Activated CD4-positive, alpha-beta T cell treated with anti-CD3 and anti-CD28 coated beads, Interleukin-2, amount 10 ng/mL, durations not matched to agents 7 days and 5 days (primary cell): ENCODE measurements at regions of chr6 and their contacts with region 1.

Region 1: GRCh38 chr6:20334334-20334733 is 67.3 kb upstream of the E2F3 start:
- DNase-seq: no peak
- H3K4me3 Mint-ChIP-seq: no peak overlapping the region
- H3K27ac Mint-ChIP-seq: no peak overlapping the region
- H3K4me1 Mint-ChIP-seq: peaks cover 39% of the 10 kb centered on the region
- H3K27me3 Mint-ChIP-seq: no peaks in the 10 kb centered on the region

Region 2: DNA sequence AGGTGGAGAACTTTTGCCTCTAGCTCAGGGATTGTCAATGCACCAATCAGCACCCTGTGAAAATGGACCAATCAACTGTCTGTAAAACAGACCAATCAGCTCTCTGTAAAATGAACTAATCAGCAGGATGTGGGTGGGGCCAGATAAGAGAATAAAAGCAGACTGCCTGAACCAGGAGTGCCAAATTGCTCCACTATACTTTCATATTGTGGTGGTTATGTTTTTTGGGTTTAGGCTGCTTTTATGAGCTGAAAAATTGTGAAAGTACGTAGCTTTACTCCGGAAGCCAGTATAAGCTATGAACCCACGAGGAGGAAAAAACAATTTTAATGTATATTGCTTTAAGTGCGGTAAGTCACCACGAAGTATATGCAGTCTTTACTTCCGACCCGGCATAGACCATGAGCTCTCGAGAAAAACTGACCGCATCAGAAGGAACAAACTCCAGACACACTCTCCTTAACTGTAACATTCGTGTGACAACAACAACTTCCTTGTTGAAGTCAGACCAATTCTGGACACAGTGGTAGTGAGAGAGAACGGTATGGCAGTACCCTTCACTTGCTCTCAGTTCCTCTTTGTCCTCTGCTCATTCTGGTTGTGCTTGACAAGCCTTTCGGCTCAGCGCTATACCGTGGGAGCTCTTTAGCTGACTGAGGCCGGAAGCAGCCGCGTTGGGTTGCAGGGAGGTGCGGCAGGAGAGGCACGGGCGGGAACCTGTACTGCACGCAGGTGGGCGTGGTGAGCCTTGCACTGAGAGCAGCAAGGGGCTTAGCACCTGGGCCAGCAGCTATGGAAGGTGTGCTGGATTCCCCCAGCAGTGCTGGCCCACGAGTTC is 14.6 kb before region 1 on chr6:
- CTCF ChIA-PET with region 1: interaction called, 21 read pairs
- POLR2A ChIA-PET with region 1: interaction called, 9 read pairs
- DNase-seq: peak; percentile 88
- H3K4me3 Mint-ChIP-seq: peak overlapping the region; percentile 79
- H3K27ac Mint-ChIP-seq: peak overlapping the region; percentile 98
- H3K4me1 Mint-ChIP-seq: peaks cover 30% of the 10 kb centered on the region
- H3K27me3 Mint-ChIP-seq: no peaks in the 10 kb centered on the region

Region 3: GRCh38 chr6:20350215-20350614 is 15.9 kb after region 1 on chr6:
- CTCF ChIA-PET with region 1: interaction called, 15 read pairs
- POLR2A ChIA-PET with region 1: no interaction called
- DNase-seq: no peak
- H3K4me3 Mint-ChIP-seq: no peak overlapping the region
- H3K27ac Mint-ChIP-seq: no peak overlapping the region
- H3K4me1 Mint-ChIP-seq: peaks cover 25% of the 10 kb centered on the region
- H3K27me3 Mint-ChIP-seq: no peaks in the 10 kb centered on the region